ENCODE measurements at regions of chr5 and their contacts with region 1.

Region 1: DNA sequence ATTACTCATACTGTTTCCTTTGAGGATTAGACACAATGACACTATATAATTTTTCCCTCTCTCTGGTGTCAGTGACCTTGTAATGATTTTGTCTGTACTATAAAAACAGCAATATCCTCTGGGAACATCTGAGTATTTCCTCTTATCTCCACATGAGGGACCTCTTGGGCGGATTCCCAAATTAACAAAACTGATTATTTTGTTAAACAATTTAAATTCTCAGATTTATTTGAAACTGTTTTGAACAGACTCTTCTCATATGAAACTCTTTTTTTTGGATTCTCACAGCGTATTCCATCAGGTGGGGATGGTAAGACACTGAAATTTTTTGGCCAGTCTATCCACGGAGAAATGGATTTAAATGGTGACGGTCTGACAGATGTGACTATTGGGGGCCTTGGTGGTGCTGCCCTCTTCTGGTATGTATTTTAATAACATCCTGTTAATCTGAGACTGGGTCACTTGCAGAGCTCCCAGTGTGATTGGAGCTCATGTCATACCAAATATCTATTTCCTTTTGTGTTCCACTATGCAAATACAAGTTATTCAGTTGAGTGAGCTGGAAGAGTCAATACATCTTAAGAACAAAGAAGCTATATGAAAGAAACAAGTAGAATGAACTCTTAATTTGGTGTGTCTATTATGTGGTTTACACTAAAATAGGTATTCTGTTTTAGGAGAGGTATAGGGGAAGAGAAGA is 73.8 kb upstream of the ITGA2 start:
- DNase-seq: peak; percentile 50 to 65 (median 59)
- ATAC-seq: peak; percentile 95
- H3K4me3 ChIP-seq: no peak overlapping the region
- H3K27ac ChIP-seq: no peak overlapping the region
- H3K4me1 ChIP-seq: no peaks in the 10 kb centered on the region
- H3K27me3 ChIP-seq: no peaks in the 10 kb centered on the region
- CTCF ChIP-seq: peak; percentile 65 to 80 (median 69)
- EP300 ChIP-seq: no peak
- POLR2A ChIP-seq: no peak
- RAD21 ChIP-seq: peak; percentile 51 to 69

Region 2: DNA sequence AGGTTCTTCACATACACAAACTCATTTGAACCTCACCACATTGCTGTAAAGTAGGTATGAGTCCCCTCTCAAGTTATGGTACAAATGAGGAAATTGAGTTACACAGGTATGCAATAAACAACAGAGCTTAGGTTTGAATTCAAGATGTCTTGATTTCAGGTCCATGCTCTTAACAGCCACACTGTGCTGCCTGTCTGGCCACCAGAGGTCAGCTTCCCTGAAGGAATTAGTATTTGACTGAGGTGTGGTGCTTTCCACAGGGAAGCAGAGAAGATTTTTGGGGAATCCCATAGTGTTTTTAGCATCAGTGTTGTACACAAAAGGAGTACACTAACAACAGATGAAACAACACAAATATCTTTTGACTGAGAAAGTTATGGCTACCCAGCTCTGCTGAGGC is 222.0 kb before region 1 on chr5:
- CTCF ChIA-PET with region 1: interaction called, 3 read pairs
- POLR2A ChIA-PET with region 1: no interaction called
- in situ Hi-C with region 1: no loop called
- intact Hi-C with region 1: loop called (anchors 5 kb)
- DNase-seq: peak in 1 of 4 experiments; percentile 10
- ATAC-seq: no peak; the same call in 2 of the 3 replicates
- H3K4me3 ChIP-seq: no peak overlapping the region
- H3K27ac ChIP-seq: no peak overlapping the region
- H3K4me1 ChIP-seq: no peaks in the 10 kb centered on the region
- H3K27me3 ChIP-seq: no peaks in the 10 kb centered on the region
- CTCF ChIP-seq: peak; percentile 21 to 23 (median 23); a peak in 3 of 6 replicates
- EP300 ChIP-seq: no peak
- POLR2A ChIP-seq: no peak
- RAD21 ChIP-seq: peak in 1 of 2 experiments; percentile 38; a peak in 2 of 4 replicates

Region 3: DNA sequence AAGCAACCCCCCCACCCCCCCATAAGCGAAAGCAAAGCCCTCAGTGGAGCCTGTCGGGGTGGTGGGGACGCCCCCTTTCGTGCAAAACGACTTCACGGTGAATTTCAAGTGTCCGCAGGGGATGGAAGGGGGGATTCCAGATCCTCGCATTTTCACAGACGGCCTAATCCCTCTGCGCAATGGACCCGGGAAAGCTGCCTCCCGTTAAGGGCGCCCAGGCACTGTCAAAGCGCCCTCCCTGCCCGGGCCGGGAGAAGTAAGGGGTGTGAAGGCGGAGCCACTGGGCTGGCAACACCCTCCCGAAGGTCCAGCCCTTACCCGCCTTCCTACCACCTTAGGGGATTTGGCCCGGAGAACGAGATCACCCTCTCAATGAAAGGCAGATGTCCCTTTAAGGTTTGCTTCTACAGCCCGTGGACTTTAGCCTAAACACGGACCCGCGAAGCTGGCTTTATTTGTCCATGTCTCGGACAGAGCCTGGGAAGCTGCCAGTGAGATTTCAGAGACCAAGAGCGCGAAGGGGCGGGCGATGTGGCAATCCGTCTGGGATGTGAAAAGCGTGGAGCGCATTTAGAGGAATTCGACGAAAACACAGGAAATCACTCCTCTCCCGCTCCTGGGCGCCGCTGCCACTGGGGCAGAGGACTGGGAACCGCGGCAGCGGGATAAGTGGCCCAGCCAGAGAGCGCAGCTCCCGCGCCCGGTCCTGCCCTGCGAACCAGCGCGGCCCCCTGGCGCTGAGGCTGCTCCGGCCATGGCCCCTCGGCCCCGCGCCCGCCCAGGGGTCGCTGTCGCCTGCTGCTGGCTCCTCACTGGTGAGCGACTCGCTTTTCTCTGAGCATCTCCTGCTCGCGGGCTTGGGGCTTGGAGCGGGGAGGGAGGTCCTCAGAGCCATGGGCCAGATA is 127.5 kb before region 1 on chr5 and contains the starts of genes ITGA1 and PELO:
- CTCF ChIA-PET with region 1: interaction called, 4 read pairs
- POLR2A ChIA-PET with region 1: no interaction called
- in situ Hi-C with region 1: no loop called
- intact Hi-C with region 1: loop called (anchors 1 kb)
- DNase-seq: no peak
- ATAC-seq: peak; percentile 45
- H3K4me3 ChIP-seq: no peak within 1 kb of the TSS
- H3K27ac ChIP-seq: no peak within 1 kb of the TSS
- H3K4me1 ChIP-seq: peaks cover 0 to 9% of the 10 kb centered on the region in 2 experiments; a peak in 2 of 5 replicates
- H3K27me3 ChIP-seq: peaks cover 0 to 10% of the 10 kb centered on the region in 2 experiments; a peak in 2 of 5 replicates
- CTCF ChIP-seq: no peak
- EP300 ChIP-seq: no peak
- POLR2A ChIP-seq: no peak
- RAD21 ChIP-seq: no peak
- polyA plus RNA-seq, gene ITGA1: not detected
- polyA plus RNA-seq, gene PELO: 5.8 to 8.9 TPM

Measured in K562 (cell line).